Activated CD4-positive, alpha-beta T cell treated with anti-CD3 and anti-CD28 coated beads, Interleukin-2, amount 10 ng/mL, durations not matched to agents 24 days and 14 days (primary cell): ENCODE measurements at regions of chr20 and their contacts with region 1.

Region 1: GRCh38 chr20:57596998-57597939 is 23.0 kb downstream of the ZBP1 start:
- DNase-seq: peak; percentile 92
- H3K4me3 Mint-ChIP-seq: no peak overlapping the region
- H3K27ac Mint-ChIP-seq: peak overlapping the region; percentile 20
- H3K4me1 Mint-ChIP-seq: peaks cover 10% of the 10 kb centered on the region
- H3K27me3 Mint-ChIP-seq: peaks cover 34% of the 10 kb centered on the region

Region 2: GRCh38 chr20:57383447-57384347 is 213.6 kb before region 1 on chr20:
- intact Hi-C with region 1: loop called (anchors 5 kb)
- DNase-seq: no peak
- H3K4me3 Mint-ChIP-seq: no peak overlapping the region
- H3K27ac Mint-ChIP-seq: no peak overlapping the region
- H3K4me1 Mint-ChIP-seq: peaks cover 15% of the 10 kb centered on the region
- H3K27me3 Mint-ChIP-seq: no peaks in the 10 kb centered on the region

Region 3: DNA sequence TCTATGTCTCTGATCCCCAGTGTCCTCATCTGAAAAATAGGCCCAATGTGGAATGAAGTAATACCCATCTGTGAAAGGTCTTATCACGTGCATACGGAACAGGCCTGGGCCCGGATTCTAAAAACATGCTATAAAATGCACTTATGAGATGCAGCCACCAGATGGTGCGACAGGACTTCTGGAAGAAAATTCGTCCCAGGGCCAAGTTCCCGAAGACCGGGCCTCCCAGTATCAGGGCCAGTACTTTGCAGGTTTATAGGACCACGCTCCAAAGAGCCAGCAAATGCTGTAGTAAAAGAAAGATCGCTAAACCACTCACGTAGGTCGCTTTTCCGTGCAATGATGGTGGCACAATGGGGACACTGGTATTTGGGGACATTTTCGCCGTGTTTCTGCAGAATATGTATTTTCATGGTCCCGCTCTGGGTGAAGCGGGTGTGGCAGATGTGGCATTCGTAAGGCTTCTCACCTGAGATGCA is 83.0 kb before region 1 on chr20:
- intact Hi-C with region 1: loop called (anchors 1 kb)
- DNase-seq: peak; percentile 78
- H3K4me3 Mint-ChIP-seq: no peak overlapping the region
- H3K27ac Mint-ChIP-seq: no peak overlapping the region
- H3K4me1 Mint-ChIP-seq: no peaks in the 10 kb centered on the region
- H3K27me3 Mint-ChIP-seq: peaks cover 22% of the 10 kb centered on the region

Region 4: GRCh38 chr20:57654363-57654997 is 57.2 kb after region 1 on chr20:
- intact Hi-C with region 1: loop called (anchors 2 kb)
- DNase-seq: peak; percentile 85
- H3K4me3 Mint-ChIP-seq: no peak overlapping the region
- H3K27ac Mint-ChIP-seq: no peak overlapping the region
- H3K4me1 Mint-ChIP-seq: peaks cover 11% of the 10 kb centered on the region
- H3K27me3 Mint-ChIP-seq: peaks cover 3% of the 10 kb centered on the region

Region 5: DNA sequence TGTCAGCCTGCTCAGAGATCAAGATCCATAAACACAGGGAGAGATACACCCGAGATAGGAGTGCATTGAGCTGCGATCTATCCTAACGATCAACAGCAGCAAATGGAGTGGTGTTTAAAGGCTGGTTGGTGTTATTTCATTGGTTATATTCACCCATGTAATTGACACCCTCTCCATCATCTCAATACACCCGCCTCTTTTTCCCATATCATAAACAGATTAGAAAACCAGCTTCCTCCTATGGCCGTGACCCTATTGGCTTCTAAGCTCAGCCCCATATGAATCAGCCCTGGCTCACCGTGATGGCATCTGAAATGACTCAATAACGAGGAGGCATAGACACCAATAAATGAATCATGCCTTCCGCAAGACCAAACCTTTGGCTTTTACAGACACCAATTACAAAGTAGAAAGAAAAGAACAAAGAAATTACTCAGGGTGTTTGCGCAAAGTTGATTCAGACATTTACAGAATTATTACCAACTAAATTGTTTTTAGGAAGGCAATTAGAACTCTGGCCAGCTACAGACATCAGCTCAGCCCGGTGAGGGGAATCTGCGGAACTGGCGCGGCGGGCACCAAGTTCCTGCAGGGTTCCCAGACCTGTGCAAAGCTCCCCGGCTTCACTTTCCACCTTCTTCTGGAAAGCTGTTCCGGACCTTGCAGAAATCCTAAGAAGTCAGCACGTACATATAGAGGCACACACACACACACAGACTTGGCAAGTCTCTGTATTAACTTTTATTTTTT is 101.0 kb after region 1 on chr20:
- intact Hi-C with region 1: no loop called
- DNase-seq: peak; percentile 72
- H3K4me3 Mint-ChIP-seq: peak overlapping the region; percentile 32
- H3K27ac Mint-ChIP-seq: peak overlapping the region; percentile 44
- H3K4me1 Mint-ChIP-seq: peaks cover 9% of the 10 kb centered on the region
- H3K27me3 Mint-ChIP-seq: peaks cover 9% of the 10 kb centered on the region

Region 6: DNA sequence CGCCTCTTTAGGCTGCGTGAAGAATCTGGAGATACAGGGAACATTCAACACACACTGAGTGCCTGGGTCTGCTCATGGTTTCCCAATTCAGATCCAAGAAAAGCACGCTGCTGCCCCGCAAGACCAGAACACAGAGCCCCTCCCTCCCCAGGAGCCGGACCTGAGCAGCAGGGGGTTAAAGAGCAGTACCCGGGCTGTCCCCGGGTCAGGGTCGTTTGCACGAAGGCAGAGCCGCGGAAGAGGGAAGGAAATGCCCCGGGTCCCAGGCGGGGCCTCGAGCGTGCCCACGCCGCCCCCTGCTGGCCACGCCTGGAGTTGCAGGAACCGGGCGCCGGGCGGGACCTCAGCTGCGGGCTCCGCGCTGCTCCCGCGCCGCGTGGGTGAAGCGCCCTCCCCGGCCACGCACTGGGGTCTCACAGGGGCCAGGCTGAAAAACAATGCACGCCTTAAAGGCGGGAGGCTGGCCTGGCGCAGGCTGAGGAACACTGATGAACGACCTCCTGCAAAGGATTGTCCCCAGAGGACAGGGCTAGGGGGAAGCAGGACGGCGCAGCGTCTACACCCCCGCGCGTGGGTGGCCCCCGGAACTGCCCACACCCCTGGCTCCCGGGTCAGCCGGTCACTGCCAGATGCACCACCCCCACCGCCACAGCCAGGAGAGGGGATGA is 582.3 kb after region 1 on chr20:
- intact Hi-C with region 1: loop called (anchors 2 kb)
- DNase-seq: peak; percentile 92
- H3K4me3 Mint-ChIP-seq: peak overlapping the region; percentile 59
- H3K27ac Mint-ChIP-seq: no peak overlapping the region
- H3K4me1 Mint-ChIP-seq: peaks cover 4% of the 10 kb centered on the region
- H3K27me3 Mint-ChIP-seq: peaks cover 23% of the 10 kb centered on the region